Activated CD8-positive, alpha-beta T cell treated with anti-CD3 and anti-CD28 coated beads, Interleukin-2, amount 10 ng/mL, durations not matched to agents 7 days and 5 days (primary cell): ENCODE measurements at regions of chr10 and their contacts with region 1.

Region 1: GRCh38 chr10:22648547-22648961 is 65.8 kb downstream of the PIP4K2A start:
- DNase-seq: no peak
- ATAC-seq: no peak
- H3K4me3 Mint-ChIP-seq: peak overlapping the region; percentile 71
- H3K27ac Mint-ChIP-seq: peak overlapping the region; percentile 79
- H3K4me1 Mint-ChIP-seq: peaks cover 95% of the 10 kb centered on the region
- H3K27me3 Mint-ChIP-seq: no peaks in the 10 kb centered on the region

Region 2: DNA sequence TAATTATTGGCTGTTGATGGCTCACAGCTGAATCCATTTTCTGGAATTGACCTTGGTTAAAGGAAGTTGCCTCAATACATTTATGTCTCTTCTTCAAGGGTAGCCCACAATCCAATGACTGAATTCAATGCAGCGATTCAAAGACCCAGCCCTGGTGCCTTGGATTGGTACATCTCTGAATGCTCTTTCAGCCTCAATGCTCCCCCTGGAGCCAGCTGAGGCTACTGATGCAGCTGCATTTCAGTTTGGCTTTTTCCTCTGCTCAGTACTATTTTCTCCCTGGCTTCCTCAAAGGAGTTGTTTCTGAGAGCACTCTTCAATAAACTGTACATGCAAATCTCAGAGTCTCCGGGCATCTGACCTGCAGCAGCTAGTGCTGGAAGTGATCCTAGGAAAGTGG is 430.1 kb before region 1 on chr10:
- CTCF ChIA-PET with region 1: no interaction called
- POLR2A ChIA-PET with region 1: no interaction called
- DNase-seq: no peak
- ATAC-seq: no peak
- H3K4me3 Mint-ChIP-seq: no peak overlapping the region
- H3K27ac Mint-ChIP-seq: no peak overlapping the region
- H3K4me1 Mint-ChIP-seq: peaks cover 10% of the 10 kb centered on the region
- H3K27me3 Mint-ChIP-seq: peaks cover 4% of the 10 kb centered on the region

Region 3: GRCh38 chr10:22527520-22527919 is 121.0 kb before region 1 on chr10:
- CTCF ChIA-PET with region 1: no interaction called
- POLR2A ChIA-PET with region 1: no interaction called
- DNase-seq: no peak
- ATAC-seq: no peak
- H3K4me3 Mint-ChIP-seq: no peak overlapping the region
- H3K27ac Mint-ChIP-seq: no peak overlapping the region
- H3K4me1 Mint-ChIP-seq: no peaks in the 10 kb centered on the region
- H3K27me3 Mint-ChIP-seq: peaks cover 34% of the 10 kb centered on the region

Region 4: GRCh38 chr10:22630234-22631174 is 18.1 kb before region 1 on chr10:
- CTCF ChIA-PET with region 1: interaction called, 16 read pairs
- POLR2A ChIA-PET with region 1: interaction called, 10 read pairs
- DNase-seq: peak; percentile 56
- ATAC-seq: peak; percentile 87
- H3K4me3 Mint-ChIP-seq: peak overlapping the region; percentile 78
- H3K27ac Mint-ChIP-seq: peak overlapping the region; percentile 96
- H3K4me1 Mint-ChIP-seq: peaks cover 92% of the 10 kb centered on the region
- H3K27me3 Mint-ChIP-seq: no peaks in the 10 kb centered on the region